Dorsolateral prefrontal cortex (tissue), 120 donors: ENCODE measurements at regions of chr21 and their contacts with region 1.

Region 1: DNA sequence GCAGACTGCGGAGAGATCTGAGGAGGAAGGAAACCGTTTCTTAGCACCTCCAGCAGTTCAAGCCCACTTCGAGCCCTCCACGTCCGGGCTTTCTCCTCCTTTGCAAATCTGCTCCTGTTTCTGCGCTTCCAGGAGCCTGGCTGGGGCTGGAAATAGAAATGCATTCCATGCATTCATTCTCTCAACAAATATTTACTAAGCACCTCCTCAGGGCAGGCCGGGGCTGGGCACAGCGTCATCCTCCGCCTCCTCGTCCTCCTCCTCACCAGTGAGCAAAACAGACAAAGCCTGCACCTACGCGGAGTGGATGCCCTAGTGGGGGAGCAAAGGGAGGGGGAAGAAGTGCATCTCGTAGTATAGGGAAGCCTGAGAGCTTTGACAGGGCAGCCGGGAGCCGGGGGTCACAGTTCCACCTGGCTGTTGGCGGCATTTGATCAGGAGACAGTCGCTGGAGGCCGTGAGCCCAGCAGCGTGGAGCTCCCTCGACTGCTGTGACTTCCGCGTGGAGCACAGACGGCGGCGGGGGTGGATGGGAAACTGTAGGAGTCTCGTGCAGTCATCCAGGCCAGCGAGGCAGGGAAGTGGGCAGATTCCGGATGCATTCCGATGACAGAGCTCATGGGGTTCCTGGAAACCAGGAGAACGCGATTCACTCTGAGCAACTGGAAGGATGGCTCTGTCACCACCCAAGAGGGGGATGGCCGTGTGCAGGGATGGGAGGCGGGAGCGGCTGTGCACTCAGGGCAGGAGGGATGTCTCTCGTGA is 93.5 kb downstream of the SIK1 start:
- DNase-seq: peak in 5 of 10 donors; percentile 55 to 74 (median 59)
- H3K4me3 ChIP-seq: peak overlapping the region in 1 of 59 donors; percentile 13
- H3K27ac ChIP-seq: peak overlapping the region in 41 of 59 donors; percentile 3 to 82 (median 63)
- H3K27me3 ChIP-seq: no peaks in the 10 kb centered on the region
- CTCF ChIP-seq: no peak

Region 2: DNA sequence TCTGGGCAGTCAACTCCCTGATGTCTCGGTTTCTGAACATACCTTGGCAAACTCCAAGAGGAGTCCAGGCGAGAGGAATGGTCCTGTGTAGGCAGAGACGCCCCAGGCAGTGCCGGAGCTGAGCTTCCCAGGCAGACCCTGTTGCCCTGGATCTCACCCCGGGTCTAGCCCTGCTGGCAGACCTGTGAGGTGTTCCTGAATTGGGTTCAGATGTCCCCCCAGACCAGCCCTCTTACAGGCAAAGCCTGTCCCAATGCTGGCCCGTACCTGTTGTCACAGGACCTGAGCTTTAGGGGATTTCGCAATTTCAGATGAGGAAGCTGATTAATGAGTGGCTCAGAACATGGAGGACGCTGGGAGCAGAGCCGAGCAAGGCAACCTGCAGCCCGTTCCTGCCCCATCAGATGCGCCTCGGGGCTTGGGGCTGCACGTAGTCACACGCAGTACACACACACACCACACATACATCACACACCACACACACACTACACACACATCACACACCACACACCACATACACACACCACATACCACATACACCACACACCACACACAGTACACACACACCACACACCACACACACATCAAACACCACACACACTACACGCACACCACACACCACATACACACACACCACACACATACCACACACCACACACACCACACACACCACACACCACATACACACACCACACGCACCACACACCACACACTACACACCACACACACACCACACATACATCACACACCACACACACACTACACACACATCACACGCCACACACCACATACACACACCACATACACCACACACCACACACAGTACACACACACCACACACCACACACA is 718.4 kb before region 1 on chr21:
- intact Hi-C with region 1: no loop called
- DNase-seq: no peak
- H3K4me3 ChIP-seq: no peak overlapping the region
- H3K27ac ChIP-seq: no peak overlapping the region
- H3K27me3 ChIP-seq: peaks cover 0 to 39% (median 15%) of the 10 kb centered on the region in 45 donors
- CTCF ChIP-seq: no peak

Region 3: DNA sequence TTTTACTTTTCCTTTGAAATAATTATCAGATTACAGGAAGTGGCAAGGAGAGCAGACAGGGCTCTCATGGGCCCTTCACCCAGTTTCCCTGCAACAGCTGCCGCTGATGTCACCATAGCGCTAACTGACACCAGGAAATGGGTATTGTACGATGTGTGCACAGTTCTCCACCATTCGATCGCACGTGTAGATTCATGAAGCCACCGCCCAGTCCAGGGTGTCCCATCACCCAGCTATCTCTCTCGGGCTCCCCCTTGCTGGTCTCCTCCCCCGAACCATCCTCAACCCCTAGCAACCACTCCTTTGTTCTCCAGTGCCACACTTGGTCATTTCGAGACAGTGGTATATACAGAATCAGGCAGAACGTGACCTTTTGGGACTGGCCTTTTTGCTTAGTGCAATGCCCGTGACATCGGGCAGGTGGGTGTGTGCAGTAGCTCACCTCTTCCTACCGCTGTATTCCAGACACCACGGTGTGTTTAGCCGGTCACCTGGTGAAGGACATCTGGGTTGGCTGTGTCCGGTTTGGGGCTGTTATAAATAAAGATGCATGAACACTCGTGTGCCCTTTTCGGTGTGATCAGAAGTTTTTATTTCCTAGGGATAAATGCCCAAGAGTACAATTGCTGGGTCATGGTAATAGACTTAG is 46.2 kb before region 1 on chr21:
- intact Hi-C with region 1: loop called in 1 of 2 experiments (anchors 5 kb)
- DNase-seq: no peak
- H3K4me3 ChIP-seq: no peak overlapping the region
- H3K27ac ChIP-seq: no peak overlapping the region
- H3K27me3 ChIP-seq: no peaks in the 10 kb centered on the region
- CTCF ChIP-seq: no peak

Region 4: DNA sequence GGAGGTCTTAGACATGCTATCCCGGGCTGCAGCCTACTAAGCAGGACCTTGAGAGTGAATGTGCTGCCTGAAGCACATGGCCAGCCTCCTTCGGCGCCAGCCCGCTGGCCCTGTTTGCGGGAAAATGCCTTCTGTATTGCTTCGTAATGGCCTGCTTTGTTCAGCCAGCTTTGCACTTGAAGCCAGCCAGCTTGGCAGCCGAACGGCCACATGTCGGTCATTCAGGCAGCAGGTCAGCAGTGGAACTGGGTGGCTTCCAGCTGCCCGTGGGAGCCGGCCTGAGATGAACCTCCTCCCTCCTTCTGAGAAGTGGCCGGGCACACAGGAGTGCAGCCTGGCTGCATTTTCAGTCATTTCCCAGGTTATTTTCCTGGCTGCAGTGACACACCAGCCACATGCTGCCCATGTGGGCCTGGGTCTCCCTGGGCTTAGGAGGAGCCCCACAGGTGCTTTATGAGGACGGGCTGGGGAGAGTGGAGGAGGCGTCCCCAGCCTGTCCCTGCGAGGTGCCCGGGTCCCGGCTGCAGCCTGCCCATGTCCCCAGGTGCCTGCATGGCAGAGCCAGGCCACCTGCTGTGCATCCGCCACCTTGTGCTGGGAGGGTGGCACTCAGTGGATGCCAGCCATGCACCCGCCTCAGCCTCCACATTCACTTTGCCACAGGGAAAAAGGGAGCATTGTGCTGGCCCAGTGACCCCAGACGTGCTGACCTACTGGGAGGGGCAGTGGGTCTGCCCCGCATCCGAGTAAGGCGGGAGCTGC is 10.1 kb before region 1 on chr21:
- intact Hi-C with region 1: loop called in 1 of 2 experiments (anchors 1 kb)
- DNase-seq: peak; percentile 66 to 89 (median 85)
- H3K4me3 ChIP-seq: no peak overlapping the region
- H3K27ac ChIP-seq: peak overlapping the region in 12 of 59 donors; percentile 28 to 71 (median 44)
- H3K27me3 ChIP-seq: no peaks in the 10 kb centered on the region
- CTCF ChIP-seq: peak in 2 of 56 donors; percentile 20 to 34